Activated T-helper 2 cell treated with anti-CD3 and anti-CD28 coated beads, Interferon-gamma antibody, Interleukin-2, Interleukin-4, amounts not matched to agents 10 μg/mL and 5 μg/mL and 100 μg/mL, durations not matched to agents 14 hours and 24 hours and 36 hours (primary cell): ENCODE measurements at regions of chr2 and their contacts with region 1.

Region 1: GRCh38 chr2:36562973-36563532 is 34.9 kb downstream of the FEZ2 start:
- DNase-seq: no peak
- H3K4me3 Mint-ChIP-seq: no peak overlapping the region
- H3K27ac Mint-ChIP-seq: no peak overlapping the region
- H3K4me1 Mint-ChIP-seq: peaks cover 12% of the 10 kb centered on the region
- H3K27me3 Mint-ChIP-seq: no peaks in the 10 kb centered on the region

Region 2: GRCh38 chr2:36536776-36537175 is 26.3 kb before region 1 on chr2:
- intact Hi-C with region 1: loop called (anchors 1 kb)
- DNase-seq: no peak
- H3K4me3 Mint-ChIP-seq: no peak overlapping the region
- H3K27ac Mint-ChIP-seq: no peak overlapping the region
- H3K4me1 Mint-ChIP-seq: no peaks in the 10 kb centered on the region
- H3K27me3 Mint-ChIP-seq: no peaks in the 10 kb centered on the region